ENCODE measurements at regions of chr15 and their contacts with region 1.

Region 1: DNA sequence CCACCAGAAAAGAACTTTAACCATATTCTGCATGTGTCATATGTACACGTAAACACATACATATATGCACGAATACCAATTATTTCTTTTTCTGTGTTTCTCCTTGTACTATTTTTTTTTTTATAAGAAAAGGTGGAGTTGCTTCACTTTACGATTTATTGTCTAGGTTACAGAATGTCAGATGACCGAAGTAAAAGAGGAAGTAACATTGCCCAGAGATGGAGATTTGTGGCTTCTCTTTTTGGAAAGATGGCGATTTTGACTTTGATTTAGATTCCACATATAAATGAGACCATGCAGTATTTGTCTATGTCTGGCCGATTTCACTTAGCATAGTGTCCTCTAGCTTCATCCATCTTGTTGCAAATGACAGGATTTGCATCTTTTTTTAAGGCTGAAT is 293.1 kb downstream of the SV2B start:
- DNase-seq: no peak
- ATAC-seq: no peak
- H3K4me3 ChIP-seq: no peak overlapping the region
- H3K27ac ChIP-seq: no peak overlapping the region
- H3K4me1 ChIP-seq: no peaks in the 10 kb centered on the region
- H3K27me3 ChIP-seq: no peaks in the 10 kb centered on the region
- CTCF ChIP-seq: no peak
- POLR2A ChIP-seq: no peak

Region 2: GRCh38 chr15:91126080-91126479 is 267.1 kb before region 1 on chr15:
- intact Hi-C with region 1: no loop called
- DNase-seq: no peak
- ATAC-seq: no peak
- H3K4me3 ChIP-seq: no peak overlapping the region
- H3K27ac ChIP-seq: no peak overlapping the region
- H3K4me1 ChIP-seq: peaks cover 0 to 7% (median 0%) of the 10 kb centered on the region in 12 donors
- H3K27me3 ChIP-seq: peaks cover 0 to 22% (median 0%) of the 10 kb centered on the region in 9 donors
- CTCF ChIP-seq: no peak
- POLR2A ChIP-seq: no peak

Region 3: GRCh38 chr15:91338766-91339165 is 54.4 kb before region 1 on chr15:
- intact Hi-C with region 1: no loop called
- DNase-seq: no peak
- ATAC-seq: no peak
- H3K4me3 ChIP-seq: no peak overlapping the region
- H3K27ac ChIP-seq: no peak overlapping the region
- H3K4me1 ChIP-seq: no peaks in the 10 kb centered on the region
- H3K27me3 ChIP-seq: peaks cover 0 to 19% (median 2%) of the 10 kb centered on the region in 9 donors
- CTCF ChIP-seq: no peak
- POLR2A ChIP-seq: no peak

Region 4: GRCh38 chr15:91456251-91456738 is 63.1 kb after region 1 on chr15:
- intact Hi-C with region 1: loop called in 1 of 10 experiments (anchors 10 kb)
- DNase-seq: no peak
- ATAC-seq: no peak
- H3K4me3 ChIP-seq: no peak overlapping the region
- H3K27ac ChIP-seq: no peak overlapping the region
- H3K4me1 ChIP-seq: no peaks in the 10 kb centered on the region
- H3K27me3 ChIP-seq: no peaks in the 10 kb centered on the region
- CTCF ChIP-seq: no peak
- POLR2A ChIP-seq: no peak

Measured in heart left ventricle (tissue), 16 donors.